ENCODE measurements at regions of chr17 and their contacts with region 1.

Region 1: DNA sequence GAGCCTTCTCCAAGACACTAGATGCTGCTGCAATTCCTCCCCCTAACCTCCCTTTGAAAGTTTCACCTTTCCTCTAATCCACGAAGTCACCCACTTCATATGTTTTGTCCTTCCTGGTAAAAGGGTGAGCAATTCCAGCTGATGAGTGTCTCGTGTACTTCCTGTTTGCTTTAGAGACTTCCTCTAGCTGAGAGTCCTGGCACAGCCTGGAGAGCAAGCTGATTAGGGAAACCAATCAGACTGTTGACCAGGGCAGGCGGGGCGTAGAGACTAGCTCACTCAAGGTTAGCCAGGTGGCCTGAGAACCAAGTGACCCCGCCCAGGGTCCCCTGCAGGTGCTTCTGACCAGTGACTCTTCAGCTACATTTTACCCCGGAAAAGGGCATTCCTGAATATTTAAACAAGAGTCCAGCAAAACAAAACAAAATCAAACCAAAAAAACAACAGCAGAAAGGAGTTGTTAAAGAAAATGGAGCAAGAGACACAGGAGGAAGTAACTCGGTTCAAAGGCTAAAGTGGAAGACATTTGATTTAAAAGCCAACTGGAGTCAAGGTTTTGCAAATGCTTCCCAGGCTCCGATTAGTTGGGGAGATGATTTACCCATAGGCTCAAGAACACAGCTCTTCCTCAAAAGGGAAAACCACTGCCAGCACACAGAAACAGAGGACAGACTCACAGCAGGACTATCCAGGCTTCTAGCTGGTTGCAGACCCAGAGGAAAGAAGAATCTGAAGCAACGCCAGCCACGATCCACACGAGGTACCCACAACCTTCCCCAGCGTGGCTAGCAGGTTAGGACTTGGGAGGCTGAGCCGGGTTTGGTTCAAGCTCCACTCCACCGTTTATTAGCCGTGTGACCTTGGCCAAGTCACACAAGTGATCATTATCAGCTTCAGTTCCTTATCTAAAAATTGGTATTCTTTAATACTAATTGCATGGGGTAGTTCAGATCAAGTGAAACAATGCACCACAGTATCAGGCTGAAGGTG is 13.4 kb downstream of the HSPB9 start:
- DNase-seq: peak; percentile 91
- ATAC-seq: peak; percentile 95
- H3K4me3 ChIP-seq: no peak overlapping the region; a peak in 1 of 6 replicates
- H3K27ac ChIP-seq: peak overlapping the region; percentile 56
- H3K4me1 ChIP-seq: peaks cover 49% of the 10 kb centered on the region
- H3K27me3 ChIP-seq: no peaks in the 10 kb centered on the region
- CTCF ChIP-seq: peak; percentile 22; the same call in 1 of the 2 replicates
- EP300 ChIP-seq: peak in 1 of 2 experiments; percentile 27; a peak in 1 of 4 replicates
- POLR2A ChIP-seq: no peak
- RAD21 ChIP-seq: no peak

Region 2: GRCh38 chr17:42120770-42121769 is 14.9 kb before region 1 on chr17 and contains the start of gene KAT2A:
- CTCF ChIA-PET with region 1: no interaction called
- POLR2A ChIA-PET with region 1: interaction called, 14 read pairs
- in situ Hi-C with region 1: no loop called
- intact Hi-C with region 1: no loop called
- DNase-seq: peak; percentile 73
- ATAC-seq: peak; percentile 90
- H3K4me3 ChIP-seq: peak within 1 kb of the TSS; percentile 76 to 85 (median 79)
- H3K27ac ChIP-seq: peak within 1 kb of the TSS; percentile 68
- H3K4me1 ChIP-seq: peaks cover 30% of the 10 kb centered on the region
- H3K27me3 ChIP-seq: no peaks in the 10 kb centered on the region
- CTCF ChIP-seq: 0 out of 2 replicates have a peak, but pooled peaks have one; percentile 26
- EP300 ChIP-seq: peak in 1 of 2 experiments; percentile 46; a peak in 2 of 4 replicates
- POLR2A ChIP-seq: peak; percentile 76 to 95
- RAD21 ChIP-seq: no peak
- total RNA-seq, gene KAT2A: 20.2 and 29.1 TPM in 2 replicates

Region 3: DNA sequence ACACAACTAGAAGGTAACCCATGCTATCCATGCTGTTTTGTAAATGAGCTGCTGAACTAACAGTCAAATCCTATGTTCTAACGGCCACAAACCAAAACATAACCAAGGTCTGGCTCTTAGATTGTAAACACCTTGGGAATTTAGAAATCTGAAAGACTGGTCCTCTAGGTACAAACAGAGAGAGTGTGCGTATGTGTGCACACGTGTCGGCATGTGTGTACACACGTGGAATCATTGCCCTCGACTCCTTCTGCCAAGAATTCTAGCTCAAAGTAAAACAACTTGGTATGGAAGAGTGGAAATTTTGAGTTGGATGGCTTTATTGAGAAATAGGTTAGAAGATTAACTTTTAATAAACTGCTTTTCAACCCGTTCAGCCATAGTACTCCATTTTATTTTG is 76.4 kb after region 1 on chr17:
- CTCF ChIA-PET with region 1: no interaction called
- POLR2A ChIA-PET with region 1: no interaction called
- in situ Hi-C with region 1: no loop called
- intact Hi-C with region 1: no loop called
- DNase-seq: no peak
- ATAC-seq: no peak
- H3K4me3 ChIP-seq: no peak overlapping the region
- H3K27ac ChIP-seq: no peak overlapping the region
- H3K4me1 ChIP-seq: no peaks in the 10 kb centered on the region
- H3K27me3 ChIP-seq: no peaks in the 10 kb centered on the region
- CTCF ChIP-seq: no peak
- EP300 ChIP-seq: no peak
- POLR2A ChIP-seq: no peak
- RAD21 ChIP-seq: no peak

Measured in HepG2 (cell line).